ENCODE measurements at regions of chr5 and their contacts with region 1.

Region 1: DNA sequence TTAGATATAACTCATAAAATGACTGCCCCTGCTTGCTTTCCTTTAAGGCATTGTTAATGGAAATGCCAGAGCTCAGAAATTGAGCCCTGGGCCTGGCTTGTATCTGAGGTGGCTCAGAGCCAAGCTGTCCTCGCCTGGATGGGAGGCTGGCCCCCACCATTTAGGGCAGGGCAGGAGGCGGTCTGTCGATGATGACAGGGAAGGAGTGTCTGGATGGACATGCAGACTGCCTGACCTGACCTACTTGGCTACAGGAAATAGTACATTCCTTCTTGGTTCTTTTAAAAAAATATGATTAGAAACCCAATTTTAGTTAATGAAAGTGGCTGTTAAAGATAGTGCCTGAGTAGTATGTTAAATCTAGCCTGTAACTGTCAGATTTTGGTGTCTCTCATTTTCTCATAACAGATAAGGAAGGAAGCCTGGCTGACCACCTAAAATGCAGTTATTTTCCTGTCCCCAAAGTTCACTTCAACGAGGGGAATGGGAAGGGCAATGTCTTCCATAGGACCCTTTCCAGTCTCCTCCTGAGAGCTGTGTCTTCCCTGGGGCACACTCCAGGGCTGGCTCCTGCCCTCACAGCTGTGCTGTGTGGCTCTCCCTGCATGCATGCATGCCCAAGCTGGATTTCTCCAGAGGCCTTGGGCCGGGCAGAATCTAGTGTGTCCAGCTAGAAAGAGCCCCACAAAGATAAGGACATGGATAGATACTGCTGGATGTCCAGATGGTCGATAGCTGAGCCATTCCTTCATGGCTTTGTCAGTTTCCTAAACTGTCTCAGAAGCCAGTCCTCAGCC is 42.3 kb downstream of the MACROH2A1 start:
- DNase-seq: peak; percentile 85
- H3K4me3 ChIP-seq: no peak overlapping the region
- H3K27ac ChIP-seq: peak overlapping the region; percentile 54 to 77 (median 70)
- H3K4me1 ChIP-seq: peaks cover 5 to 50% (median 25%) of the 10 kb centered on the region in 4 donors
- H3K27me3 ChIP-seq: no peaks in the 10 kb centered on the region
- CTCF ChIP-seq: no peak
- EP300 ChIP-seq: no peak
- POLR2A ChIP-seq: no peak

Region 2: DNA sequence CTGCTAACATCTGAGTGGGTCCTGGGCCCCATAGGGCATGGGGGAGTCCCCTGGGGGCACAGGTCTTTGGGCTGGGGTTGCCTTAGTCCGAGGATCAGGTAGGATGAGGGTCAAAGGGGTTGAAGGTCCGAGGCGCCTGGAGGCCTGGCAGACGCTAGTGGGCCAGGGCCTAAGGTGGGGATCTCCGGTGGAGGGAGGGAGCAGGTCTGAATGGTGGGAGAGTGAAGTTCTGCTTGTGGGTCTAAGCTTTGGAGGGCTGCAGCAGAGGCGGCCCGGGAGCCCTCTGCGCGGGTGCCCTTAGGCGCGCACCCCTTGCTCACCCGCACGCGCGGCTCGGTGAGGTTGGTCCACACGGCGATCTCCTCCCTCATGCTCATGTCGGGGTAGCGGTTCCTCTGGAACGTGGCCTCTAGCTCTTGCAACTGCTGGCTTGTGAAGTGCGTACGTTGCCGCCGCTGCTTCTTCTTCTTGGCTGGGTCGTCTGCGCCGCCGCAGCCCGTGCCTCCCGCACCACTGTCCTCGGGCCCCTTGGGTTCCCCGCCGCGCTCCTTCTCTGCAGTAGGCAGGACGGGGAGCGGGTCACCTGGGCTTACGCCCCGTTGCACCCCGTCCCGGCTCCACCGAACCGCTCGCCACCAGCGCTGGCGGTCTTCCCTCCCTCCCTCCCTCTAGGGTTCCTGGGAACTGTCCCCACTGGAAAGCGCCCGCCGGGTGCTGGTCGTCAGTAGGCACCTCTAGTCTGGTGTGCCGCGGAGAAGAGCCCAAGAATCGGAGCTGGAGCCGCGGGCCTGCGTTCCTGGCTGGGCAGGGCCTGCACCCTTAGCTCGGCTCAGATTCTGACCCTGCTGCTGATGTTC is 325.5 kb before region 1 on chr5:
- in situ Hi-C with region 1: no loop called
- intact Hi-C with region 1: no loop called
- DNase-seq: no peak
- H3K4me3 ChIP-seq: peak overlapping the region; percentile 2 to 71 (median 36)
- H3K27ac ChIP-seq: peak overlapping the region; percentile 64 to 85 (median 72)
- H3K4me1 ChIP-seq: peaks cover 22 to 41% (median 36%) of the 10 kb centered on the region in 4 donors
- H3K27me3 ChIP-seq: peaks cover 100% of the 10 kb centered on the region
- CTCF ChIP-seq: no peak
- EP300 ChIP-seq: no peak
- POLR2A ChIP-seq: no peak

Region 3: GRCh38 chr5:135289651-135290050 is 67.1 kb before region 1 on chr5:
- in situ Hi-C with region 1: no loop called
- intact Hi-C with region 1: no loop called
- DNase-seq: no peak
- H3K4me3 ChIP-seq: no peak overlapping the region
- H3K27ac ChIP-seq: no peak overlapping the region
- H3K4me1 ChIP-seq: no peaks in the 10 kb centered on the region
- H3K27me3 ChIP-seq: peaks cover 65% of the 10 kb centered on the region
- CTCF ChIP-seq: no peak
- EP300 ChIP-seq: no peak
- POLR2A ChIP-seq: no peak

Region 4: DNA sequence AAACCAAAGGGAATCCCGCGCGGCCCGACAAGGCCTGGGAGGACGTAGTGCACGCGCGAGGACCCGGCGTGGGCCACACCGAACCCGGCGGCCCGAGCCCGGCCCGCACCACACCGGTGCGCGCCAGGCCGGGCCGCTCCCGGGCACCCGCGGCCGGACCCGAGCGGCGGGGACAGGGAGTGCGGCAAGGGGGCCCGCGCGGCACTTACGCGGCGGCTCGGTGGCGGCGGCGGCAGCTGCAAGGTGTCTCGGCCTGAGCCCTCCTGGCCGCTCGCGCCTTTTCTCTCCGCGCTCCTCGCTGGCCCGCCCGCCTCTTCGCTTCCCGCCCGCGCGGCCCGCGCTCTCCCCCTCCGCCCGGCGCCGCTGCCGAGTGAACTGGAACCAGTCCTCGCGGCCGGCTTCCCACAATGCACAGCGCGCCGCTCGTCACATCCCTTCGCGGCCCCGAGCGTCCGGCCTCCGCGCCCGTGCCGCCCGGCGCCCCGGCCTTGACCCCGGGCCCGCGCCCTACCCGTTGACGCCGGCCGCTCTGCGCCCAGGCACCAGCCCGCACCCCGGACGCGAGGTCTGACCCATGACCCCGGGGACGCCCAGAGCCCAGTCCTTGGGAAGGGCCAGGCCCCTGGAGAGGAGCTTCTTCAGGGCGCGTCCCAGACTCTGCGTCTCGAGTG is 42.3 kb after region 1 on chr5 and contains the start of gene MACROH2A1:
- in situ Hi-C with region 1: no loop called
- intact Hi-C with region 1: loop called (anchors 5 kb)
- DNase-seq: peak; percentile 92
- H3K4me3 ChIP-seq: peak within 1 kb of the TSS; percentile 95 to 99 (median 98)
- H3K27ac ChIP-seq: peak within 1 kb of the TSS; percentile 88 to 95 (median 92)
- H3K4me1 ChIP-seq: peaks cover 14 to 51% (median 41%) of the 10 kb centered on the region in 4 donors
- H3K27me3 ChIP-seq: no peaks in the 10 kb centered on the region
- CTCF ChIP-seq: no peak
- EP300 ChIP-seq: no peak
- POLR2A ChIP-seq: peak; percentile 72
- total RNA-seq, gene MACROH2A1: 190 to 348 (median 314) TPM

Measured in transverse colon (tissue), 4 donors.